WTC11 (cell line): ENCODE measurements at regions of chr13 and their contacts with region 1.

Region 1: GRCh38 chr13:99935777-99936176 is 35.8 kb downstream of the ZIC5 start:
- DNase-seq: peak; percentile 56
- ATAC-seq: peak; percentile 60
- H3K4me3 Mint-ChIP-seq: no peak overlapping the region
- H3K27ac Mint-ChIP-seq: no peak overlapping the region
- H3K4me1 Mint-ChIP-seq: peaks cover 10% of the 10 kb centered on the region
- H3K27me3 Mint-ChIP-seq: no peaks in the 10 kb centered on the region; the same call in 1 of the 2 replicates
- CTCF ChIP-seq: peak; percentile 25; the same call in 1 of the 2 replicates

Region 2: GRCh38 chr13:99898421-99898820 is 37.4 kb before region 1 on chr13:
- CTCF ChIA-PET with region 1: interaction called, 10 read pairs
- POLR2A ChIA-PET with region 1: no interaction called
- DNase-seq: no peak
- ATAC-seq: no peak
- H3K4me3 Mint-ChIP-seq: no peak overlapping the region
- H3K27ac Mint-ChIP-seq: no peak overlapping the region
- H3K4me1 Mint-ChIP-seq: peaks cover 73% of the 10 kb centered on the region
- H3K27me3 Mint-ChIP-seq: peaks cover 32% of the 10 kb centered on the region
- CTCF ChIP-seq: no peak